Ovary (tissue), 10 donors: ENCODE measurements at regions of chr4 and their contacts with region 1.

Region 1: DNA sequence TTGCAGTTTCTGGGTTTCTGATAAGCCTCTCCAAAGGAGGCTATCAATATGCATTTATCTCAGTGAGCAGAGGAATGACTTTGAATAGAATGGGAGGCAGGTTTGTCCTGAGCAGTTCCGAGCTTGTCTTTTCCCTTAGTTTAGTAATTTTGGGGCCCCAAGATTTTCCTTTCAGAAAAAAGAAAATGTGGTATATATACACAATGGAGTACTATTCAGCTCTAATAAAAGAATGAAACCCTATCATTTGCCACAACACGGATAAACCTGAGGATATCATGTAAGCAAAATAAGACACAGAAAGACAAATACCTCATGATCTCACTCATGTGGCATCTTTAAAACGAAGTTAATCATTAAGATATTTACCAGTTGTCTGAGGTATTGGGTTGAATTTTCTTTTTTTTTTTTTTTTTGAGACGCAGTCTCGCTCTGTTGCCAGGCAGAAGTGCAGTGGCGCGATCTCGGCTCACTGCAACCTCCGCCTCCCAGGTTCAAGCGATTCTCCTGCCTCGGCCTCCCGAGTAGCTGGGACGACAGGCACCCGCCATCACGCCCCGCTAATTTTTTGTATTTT is 540 bp downstream of the ZNF721 start:
- DNase-seq: no peak
- H3K4me3 ChIP-seq: peak overlapping the region; percentile 93
- H3K27ac ChIP-seq: peak overlapping the region; percentile 74 to 76
- H3K4me1 ChIP-seq: peaks cover 10% of the 10 kb centered on the region
- H3K27me3 ChIP-seq: no peaks in the 10 kb centered on the region
- CTCF ChIP-seq: no peak
- EP300 ChIP-seq: no peak
- POLR2A ChIP-seq: no peak

Region 2: GRCh38 chr4:337143-337931 is 161.1 kb before region 1 on chr4 and contains the start of gene ZNF141:
- intact Hi-C with region 1: loop called in 1 of 4 experiments (anchors 5 kb)
- DNase-seq: peak; percentile 96 to 98 (median 97)
- H3K4me3 ChIP-seq: peak within 1 kb of the TSS; percentile 92
- H3K27ac ChIP-seq: peak within 1 kb of the TSS; percentile 92 to 94
- H3K4me1 ChIP-seq: peaks cover 10% of the 10 kb centered on the region
- H3K27me3 ChIP-seq: no peaks in the 10 kb centered on the region
- CTCF ChIP-seq: no peak
- EP300 ChIP-seq: peak; percentile 2
- POLR2A ChIP-seq: peak; percentile 73
- total RNA-seq, gene ZNF141: 30.9 to 55.7 (median 40.4) TPM

Region 3: GRCh38 chr4:762211-763190 is 264.1 kb after region 1 on chr4:
- intact Hi-C with region 1: no loop called
- DNase-seq: peak in 1 of 5 donors; percentile 17
- H3K4me3 ChIP-seq: no peak overlapping the region
- H3K27ac ChIP-seq: no peak overlapping the region
- H3K4me1 ChIP-seq: no peaks in the 10 kb centered on the region
- H3K27me3 ChIP-seq: no peaks in the 10 kb centered on the region
- CTCF ChIP-seq: no peak
- EP300 ChIP-seq: no peak
- POLR2A ChIP-seq: no peak